ENCODE measurements at regions of chr10 and their contacts with region 1.

Region 1: GRCh38 chr10:119305860-119306513 is 98.6 kb downstream of the GRK5 start:
- DNase-seq: peak; percentile 87
- H3K4me3 Mint-ChIP-seq: peak overlapping the region; percentile 84
- H3K27ac Mint-ChIP-seq: peak overlapping the region; percentile 96
- H3K4me1 Mint-ChIP-seq: peaks cover 73% of the 10 kb centered on the region
- H3K27me3 Mint-ChIP-seq: peaks cover 14% of the 10 kb centered on the region

Region 2: GRCh38 chr10:119274519-119275045 is 31.4 kb before region 1 on chr10:
- CTCF ChIA-PET with region 1: no interaction called
- POLR2A ChIA-PET with region 1: no interaction called
- DNase-seq: no peak
- H3K4me3 Mint-ChIP-seq: no peak overlapping the region
- H3K27ac Mint-ChIP-seq: no peak overlapping the region
- H3K4me1 Mint-ChIP-seq: peaks cover 58% of the 10 kb centered on the region
- H3K27me3 Mint-ChIP-seq: no peaks in the 10 kb centered on the region

Region 3: GRCh38 chr10:119325131-119325530 is 19.1 kb after region 1 on chr10:
- CTCF ChIA-PET with region 1: no interaction called
- POLR2A ChIA-PET with region 1: no interaction called
- DNase-seq: no peak
- H3K4me3 Mint-ChIP-seq: no peak overlapping the region
- H3K27ac Mint-ChIP-seq: no peak overlapping the region
- H3K4me1 Mint-ChIP-seq: peaks cover 7% of the 10 kb centered on the region
- H3K27me3 Mint-ChIP-seq: no peaks in the 10 kb centered on the region

Region 4: DNA sequence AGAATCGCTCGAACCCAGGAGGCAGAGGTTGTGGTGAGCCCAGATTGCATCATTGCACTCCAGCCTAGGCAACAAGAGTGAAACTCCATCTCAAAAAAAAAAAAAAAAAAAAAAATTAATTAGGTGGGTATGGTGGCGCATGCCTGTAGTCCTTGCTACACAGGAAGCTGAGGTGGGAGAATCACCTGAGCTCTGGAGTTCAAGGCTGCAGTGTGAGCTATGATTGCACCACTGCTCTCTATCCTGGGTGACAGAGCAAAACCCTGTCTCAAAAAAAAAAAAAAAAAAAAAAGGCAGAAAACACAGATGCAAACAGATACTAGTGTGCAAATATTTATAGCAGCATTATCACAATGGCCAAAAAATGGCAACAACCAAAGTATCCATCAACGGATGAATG is 102.1 kb after region 1 on chr10:
- CTCF ChIA-PET with region 1: no interaction called
- POLR2A ChIA-PET with region 1: interaction called, 10 read pairs
- DNase-seq: no peak
- H3K4me3 Mint-ChIP-seq: no peak overlapping the region
- H3K27ac Mint-ChIP-seq: no peak overlapping the region
- H3K4me1 Mint-ChIP-seq: peaks cover 8% of the 10 kb centered on the region
- H3K27me3 Mint-ChIP-seq: no peaks in the 10 kb centered on the region

Region 5: DNA sequence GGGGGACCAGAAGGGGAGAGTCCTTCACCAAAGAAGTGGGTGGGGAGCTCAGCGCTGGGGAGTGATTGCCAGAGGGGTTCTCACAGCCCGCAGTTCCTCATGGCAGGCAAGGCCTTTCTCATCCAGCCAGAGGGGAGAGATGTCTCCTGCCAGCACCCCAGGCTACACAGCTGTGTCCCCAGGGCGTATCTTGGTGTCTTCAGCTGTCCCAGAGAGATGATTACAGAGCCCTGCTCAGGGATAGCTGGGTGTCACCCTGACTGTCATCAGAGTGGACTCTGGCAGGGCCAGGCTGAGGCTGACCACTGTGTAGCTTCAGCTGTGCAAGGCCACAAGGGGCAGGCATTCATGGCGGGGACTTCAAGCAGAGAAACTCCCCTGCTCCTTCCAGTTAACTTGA is 112.3 kb after region 1 on chr10:
- CTCF ChIA-PET with region 1: no interaction called
- POLR2A ChIA-PET with region 1: no interaction called
- DNase-seq: no peak
- H3K4me3 Mint-ChIP-seq: no peak overlapping the region
- H3K27ac Mint-ChIP-seq: no peak overlapping the region
- H3K4me1 Mint-ChIP-seq: no peaks in the 10 kb centered on the region
- H3K27me3 Mint-ChIP-seq: no peaks in the 10 kb centered on the region

Region 6: GRCh38 chr10:119457966-119458766 is 152.2 kb after region 1 on chr10:
- CTCF ChIA-PET with region 1: no interaction called
- POLR2A ChIA-PET with region 1: no interaction called
- DNase-seq: no peak
- H3K4me3 Mint-ChIP-seq: no peak overlapping the region
- H3K27ac Mint-ChIP-seq: no peak overlapping the region
- H3K4me1 Mint-ChIP-seq: peaks cover 3% of the 10 kb centered on the region
- H3K27me3 Mint-ChIP-seq: no peaks in the 10 kb centered on the region